Lower leg skin (tissue), 4 donors: ENCODE measurements at regions of chr9 and their contacts with region 1.

Region 1: GRCh38 chr9:96317335-96317980 is 15.5 kb upstream of the HSD17B3 start:
- DNase-seq: peak in 1 of 2 donors; percentile 86
- H3K4me3 ChIP-seq: no peak overlapping the region
- CTCF ChIP-seq: peak in 1 of 3 donors; percentile 40
- POLR2A ChIP-seq: no peak

Region 2: DNA sequence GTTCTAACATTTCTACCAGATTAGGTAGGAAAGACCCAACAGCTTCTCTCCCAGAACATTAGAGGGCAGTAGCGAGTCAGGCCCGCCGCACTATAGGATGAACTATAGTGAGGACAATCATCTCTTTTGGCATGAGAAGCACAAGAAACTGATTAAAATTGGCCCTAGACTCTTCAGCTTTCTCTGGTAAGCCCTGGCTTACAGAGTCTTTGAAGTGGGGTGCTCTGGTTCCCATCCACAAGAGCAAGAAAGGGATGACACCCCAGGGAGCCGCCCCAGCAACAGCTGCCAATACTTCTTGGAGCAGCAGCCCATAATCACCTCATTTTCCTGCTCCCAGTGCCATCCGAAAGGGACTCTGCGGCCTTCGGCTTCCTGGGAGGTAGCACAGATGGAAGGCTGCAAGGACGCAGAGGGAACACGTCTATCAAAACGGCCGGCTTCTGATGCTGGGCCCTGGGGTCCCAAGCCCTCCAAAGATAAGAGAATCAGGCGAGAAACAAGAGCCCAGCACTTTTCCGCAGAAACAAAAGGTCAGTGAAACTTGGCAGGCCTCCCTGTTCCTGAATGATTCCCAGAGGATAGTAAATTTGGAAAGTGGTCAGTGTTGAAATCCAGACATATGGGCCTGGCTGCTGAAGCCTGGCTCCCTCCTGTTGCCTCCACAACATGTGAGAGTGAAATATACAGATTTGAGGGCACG is 84.8 kb before region 1 on chr9:
- intact Hi-C with region 1: loop called (anchors 10 kb)
- DNase-seq: peak; percentile 75 to 86
- H3K4me3 ChIP-seq: no peak overlapping the region
- CTCF ChIP-seq: no peak
- POLR2A ChIP-seq: no peak

Region 3: DNA sequence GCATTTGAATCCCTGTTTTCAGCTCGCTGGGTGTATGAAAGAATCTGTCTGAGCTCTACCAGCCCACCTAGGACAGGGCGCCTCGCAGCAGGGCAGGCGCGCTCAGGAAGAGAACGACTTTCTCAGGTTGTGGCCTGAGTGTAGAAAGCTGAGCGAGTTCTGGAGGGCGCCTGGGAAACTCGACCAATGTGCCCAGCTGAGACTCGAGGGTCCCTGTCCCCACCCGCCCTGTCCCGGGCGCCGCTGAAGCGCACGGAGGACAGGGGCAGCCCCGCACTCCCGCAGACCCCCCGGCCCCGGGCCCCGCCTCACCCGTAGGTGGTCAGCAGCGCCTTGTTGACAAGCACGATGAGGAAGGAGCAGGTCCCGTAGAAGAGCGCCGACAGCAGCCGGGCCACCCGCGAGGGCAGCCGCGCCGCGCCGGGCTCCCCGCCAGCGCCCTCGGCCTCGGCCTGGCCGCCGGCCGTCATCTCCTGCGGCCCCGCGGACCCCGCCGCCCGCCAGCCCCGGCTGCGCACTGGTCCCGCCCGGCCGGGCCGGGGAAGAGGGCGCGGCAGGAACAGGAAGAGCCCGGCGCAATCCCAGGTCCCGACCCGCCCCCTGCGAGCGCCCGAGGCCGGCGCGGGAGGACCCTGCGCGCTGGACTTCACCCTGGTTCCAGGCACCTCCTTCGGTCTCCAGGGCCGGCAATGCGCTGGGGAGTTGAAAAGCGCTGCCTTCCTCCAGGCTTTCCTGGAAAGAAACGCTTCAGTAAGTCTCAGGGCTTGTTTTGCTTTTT is 65.9 kb after region 1 on chr9 and contains the start of gene SLC35D2:
- intact Hi-C with region 1: no loop called
- DNase-seq: peak; percentile 34 to 88
- H3K4me3 ChIP-seq: peak within 1 kb of the TSS; percentile 81
- CTCF ChIP-seq: no peak
- POLR2A ChIP-seq: no peak
- total RNA-seq, gene SLC35D2: 10.7 to 21.3 (median 13.3) TPM